ENCODE measurements at regions of chr11 and their contacts with region 1.

Region 1: DNA sequence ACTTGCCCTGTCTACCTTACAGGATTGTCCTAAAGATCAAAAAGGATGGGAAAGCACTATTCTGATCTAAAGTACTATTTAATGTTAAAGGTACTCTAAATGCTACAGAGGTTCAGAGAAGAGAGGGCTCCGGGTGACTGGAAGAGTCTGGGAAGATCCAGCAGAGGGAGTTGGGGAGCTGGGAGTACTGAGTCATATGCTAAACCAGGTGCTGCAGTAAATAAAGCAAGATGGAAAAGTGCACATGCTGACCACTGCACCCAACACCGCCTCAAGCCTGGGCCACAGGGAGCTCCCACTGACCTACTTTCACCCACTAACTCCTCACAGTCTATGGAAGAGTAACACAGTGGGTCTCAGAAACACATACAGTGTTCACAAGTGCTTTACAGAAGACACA is 49.3 kb downstream of the WT1 start:
- DNase-seq: peak in 1 of 2 donors; percentile 31
- ATAC-seq: peak; percentile 60 to 90 (median 78)
- H3K4me3 ChIP-seq: no peak overlapping the region
- H3K27ac ChIP-seq: peak overlapping the region in 3 of 10 donors; percentile 14 to 52 (median 35)
- H3K4me1 ChIP-seq: peaks cover 3 to 25% (median 12%) of the 10 kb centered on the region in 9 donors
- H3K27me3 ChIP-seq: peaks cover 0 to 4% (median 0%) of the 10 kb centered on the region in 7 donors
- CTCF ChIP-seq: peak; percentile 15 to 70 (median 52)

Region 2: GRCh38 chr11:32290783-32291182 is 95.2 kb before region 1 on chr11:
- intact Hi-C with region 1: no loop called
- DNase-seq: no peak
- ATAC-seq: peak in 1 of 8 donors; percentile 51
- H3K4me3 ChIP-seq: no peak overlapping the region
- H3K27ac ChIP-seq: no peak overlapping the region
- H3K4me1 ChIP-seq: no peaks in the 10 kb centered on the region
- H3K27me3 ChIP-seq: peaks cover 0 to 16% (median 5%) of the 10 kb centered on the region in 7 donors
- CTCF ChIP-seq: no peak

Region 3: GRCh38 chr11:32426819-32427615 is 41.0 kb after region 1 on chr11:
- intact Hi-C with region 1: loop called in 1 of 10 experiments (anchors 5 kb)
- DNase-seq: peak; percentile 76 to 87
- ATAC-seq: peak; percentile 76 to 96 (median 90)
- H3K4me3 ChIP-seq: peak overlapping the region in 9 of 10 donors; percentile 10 to 44 (median 35)
- H3K27ac ChIP-seq: peak overlapping the region; percentile 44 to 85 (median 60)
- H3K4me1 ChIP-seq: peaks cover 3 to 49% (median 21%) of the 10 kb centered on the region in 9 donors
- H3K27me3 ChIP-seq: peaks cover 0 to 77% (median 67%) of the 10 kb centered on the region in 7 donors
- CTCF ChIP-seq: no peak

Region 4: DNA sequence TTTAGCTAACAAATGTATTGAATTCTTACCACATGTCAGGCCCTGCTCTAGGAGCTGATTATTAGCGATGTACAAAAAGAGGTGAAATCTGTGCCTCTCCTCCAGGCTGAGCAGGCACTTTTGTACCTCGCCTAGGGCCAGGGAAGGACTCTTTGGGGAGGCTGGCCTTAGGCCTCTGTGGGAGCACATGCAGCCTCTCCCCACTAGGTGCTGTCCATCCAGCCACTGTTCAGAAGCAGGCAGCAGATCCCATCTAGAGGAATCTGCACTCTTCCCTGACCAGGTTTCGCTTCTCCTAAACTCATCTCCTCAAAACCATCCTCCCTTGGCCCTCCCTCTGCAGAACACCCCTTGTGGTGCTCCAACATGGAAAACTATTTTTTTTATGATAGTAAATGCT is 101.3 kb after region 1 on chr11:
- intact Hi-C with region 1: loop called in 1 of 10 experiments (anchors 5 kb)
- DNase-seq: no peak
- ATAC-seq: peak in 1 of 8 donors; percentile 33
- H3K4me3 ChIP-seq: no peak overlapping the region
- H3K27ac ChIP-seq: no peak overlapping the region
- H3K4me1 ChIP-seq: no peaks in the 10 kb centered on the region
- H3K27me3 ChIP-seq: no peaks in the 10 kb centered on the region
- CTCF ChIP-seq: peak in 3 of 9 donors; percentile 11 to 22 (median 14)

Region 5: GRCh38 chr11:32583459-32584271 is 197.7 kb after region 1 on chr11 and contains the start of gene EIF3M:
- intact Hi-C with region 1: loop called in 2 of 10 experiments (anchors 10 kb)
- DNase-seq: peak; percentile 96 to 97
- ATAC-seq: peak; percentile 100
- H3K4me3 ChIP-seq: peak within 1 kb of the TSS; percentile 56 to 98 (median 88)
- H3K27ac ChIP-seq: peak within 1 kb of the TSS; percentile 38 to 94 (median 85)
- H3K4me1 ChIP-seq: peaks cover 0 to 47% (median 26%) of the 10 kb centered on the region in 9 donors
- H3K27me3 ChIP-seq: peaks cover 0 to 10% (median 0%) of the 10 kb centered on the region in 7 donors
- CTCF ChIP-seq: no peak
- total RNA-seq, gene EIF3M: 128 to 250 (median 162) TPM

Measured in heart right ventricle (tissue), 16 donors.